Psoas muscle (tissue), 8 donors: ENCODE measurements at regions of chr6 and their contacts with region 1.

Region 1: GRCh38 chr6:17392978-17393891 is at the start of gene CAP2:
- DNase-seq: peak; percentile 74 to 91
- ATAC-seq: peak; percentile 88 to 93 (median 90)
- H3K4me3 ChIP-seq: peak within 1 kb of the TSS; percentile 78
- H3K27ac ChIP-seq: peak within 1 kb of the TSS; percentile 97
- H3K4me1 ChIP-seq: peaks cover 22% of the 10 kb centered on the region
- H3K27me3 ChIP-seq: no peaks in the 10 kb centered on the region
- CTCF ChIP-seq: no peak
- total RNA-seq, gene CAP2: 344 to 452 (median 385) TPM

Region 2: DNA sequence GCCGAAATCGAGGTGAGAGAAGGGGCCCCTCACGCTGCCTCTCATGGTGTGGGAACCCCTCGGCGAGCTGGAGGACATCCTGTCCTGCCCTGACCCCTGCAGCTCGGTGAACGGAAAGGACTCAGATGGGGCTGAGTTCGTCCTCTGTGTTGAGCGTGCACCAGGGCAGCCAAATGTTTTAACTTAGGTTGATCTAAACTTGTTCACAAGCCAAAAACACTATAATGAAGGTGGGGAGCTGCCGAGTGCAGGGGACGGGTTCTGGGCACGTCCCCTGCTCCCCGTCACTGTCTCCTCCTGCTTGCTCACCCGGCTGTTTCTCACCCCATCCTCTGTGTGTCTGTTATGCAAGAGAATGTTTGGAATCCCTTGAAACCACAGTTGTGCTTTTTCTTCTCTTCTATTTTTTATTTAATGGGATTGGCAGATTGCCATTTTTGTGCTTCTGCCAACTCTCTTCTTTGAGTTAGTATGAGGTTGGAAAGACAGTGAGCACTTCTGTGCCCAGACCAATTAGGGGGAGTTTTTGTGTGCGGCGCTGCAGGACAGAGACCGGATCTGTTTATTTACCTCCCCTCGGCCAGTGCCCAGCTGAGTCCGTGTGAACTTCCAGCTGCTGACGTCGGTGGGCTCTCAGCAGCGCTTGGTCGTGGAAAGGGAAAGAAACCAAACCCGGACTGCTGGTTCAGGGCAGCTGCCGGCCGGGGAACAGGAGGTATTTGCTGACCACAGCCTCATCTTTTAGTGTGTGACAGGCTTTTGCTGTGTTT is 1888.5 kb before region 1 on chr6:
- intact Hi-C with region 1: loop called in 1 of 2 experiments (anchors 5 kb)
- DNase-seq: peak; percentile 67 to 87
- ATAC-seq: peak; percentile 57 to 69 (median 64)
- H3K4me3 ChIP-seq: peak overlapping the region; percentile 50
- H3K27ac ChIP-seq: peak overlapping the region; percentile 78
- H3K4me1 ChIP-seq: peaks cover 53% of the 10 kb centered on the region
- H3K27me3 ChIP-seq: no peaks in the 10 kb centered on the region
- CTCF ChIP-seq: no peak

Region 3: GRCh38 chr6:16420715-16421461 is 972.3 kb before region 1 on chr6:
- intact Hi-C with region 1: no loop called
- DNase-seq: no peak
- ATAC-seq: no peak
- H3K4me3 ChIP-seq: no peak overlapping the region
- H3K27ac ChIP-seq: no peak overlapping the region
- H3K4me1 ChIP-seq: no peaks in the 10 kb centered on the region
- H3K27me3 ChIP-seq: no peaks in the 10 kb centered on the region
- CTCF ChIP-seq: no peak

Region 4: GRCh38 chr6:17281100-17281494 is 112.1 kb before region 1 on chr6 and contains the start of gene RBM24:
- intact Hi-C with region 1: loop called (anchors 2 to 10 kb)
- DNase-seq: peak; percentile 64 to 74
- ATAC-seq: peak in 3 of 4 donors; percentile 14 to 25 (median 16)
- H3K4me3 ChIP-seq: peak within 1 kb of the TSS; percentile 93
- H3K27ac ChIP-seq: peak within 1 kb of the TSS; percentile 98
- H3K4me1 ChIP-seq: peaks cover 13% of the 10 kb centered on the region
- H3K27me3 ChIP-seq: no peaks in the 10 kb centered on the region
- CTCF ChIP-seq: no peak
- total RNA-seq, gene RBM24: 135 to 248 (median 222) TPM

Region 5: GRCh38 chr6:17311595-17312311 is 81.5 kb before region 1 on chr6:
- intact Hi-C with region 1: loop called (anchors 2 to 5 kb)
- DNase-seq: peak; percentile 64 to 85
- ATAC-seq: peak; percentile 94 to 97 (median 95)
- H3K4me3 ChIP-seq: peak overlapping the region; percentile 61
- H3K27ac ChIP-seq: peak overlapping the region; percentile 95
- H3K4me1 ChIP-seq: peaks cover 3% of the 10 kb centered on the region
- H3K27me3 ChIP-seq: no peaks in the 10 kb centered on the region
- CTCF ChIP-seq: no peak

Region 6: DNA sequence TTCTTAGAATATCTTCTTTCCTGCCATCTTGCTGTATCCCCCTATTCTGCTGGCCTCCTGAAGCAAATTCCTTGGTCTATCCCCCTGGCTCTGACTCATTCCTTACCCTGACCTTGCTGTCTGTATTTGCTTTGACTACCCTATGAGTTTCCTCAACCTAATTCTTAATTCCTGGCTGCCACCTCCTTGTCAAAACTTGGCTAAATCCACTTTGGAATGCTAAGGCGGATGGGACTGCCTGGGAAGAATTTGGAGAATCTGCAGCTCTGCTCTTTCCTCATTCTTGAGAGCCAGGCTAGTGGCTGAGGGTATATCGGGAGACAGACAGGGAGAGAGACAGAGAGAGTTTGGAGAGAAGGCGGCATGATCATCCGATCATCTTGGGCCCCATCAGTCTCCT is 24.6 kb after region 1 on chr6:
- intact Hi-C with region 1: loop called in 1 of 2 experiments (anchors 2 kb)
- DNase-seq: no peak
- ATAC-seq: peak; percentile 35 to 45 (median 36)
- H3K4me3 ChIP-seq: peak overlapping the region; percentile 46
- H3K27ac ChIP-seq: peak overlapping the region; percentile 96
- H3K4me1 ChIP-seq: peaks cover 77% of the 10 kb centered on the region
- H3K27me3 ChIP-seq: no peaks in the 10 kb centered on the region
- CTCF ChIP-seq: no peak

Region 7: GRCh38 chr6:17431581-17431980 is 38.3 kb after region 1 on chr6:
- intact Hi-C with region 1: loop called (anchors 5 kb)
- DNase-seq: no peak
- ATAC-seq: peak; percentile 80 to 83 (median 81)
- H3K4me3 ChIP-seq: no peak overlapping the region
- H3K27ac ChIP-seq: peak overlapping the region; percentile 87
- H3K4me1 ChIP-seq: peaks cover 38% of the 10 kb centered on the region
- H3K27me3 ChIP-seq: no peaks in the 10 kb centered on the region
- CTCF ChIP-seq: no peak